Mammary epithelial cell (primary cell): ENCODE measurements at regions of chr5 and their contacts with region 1.

Region 1: DNA sequence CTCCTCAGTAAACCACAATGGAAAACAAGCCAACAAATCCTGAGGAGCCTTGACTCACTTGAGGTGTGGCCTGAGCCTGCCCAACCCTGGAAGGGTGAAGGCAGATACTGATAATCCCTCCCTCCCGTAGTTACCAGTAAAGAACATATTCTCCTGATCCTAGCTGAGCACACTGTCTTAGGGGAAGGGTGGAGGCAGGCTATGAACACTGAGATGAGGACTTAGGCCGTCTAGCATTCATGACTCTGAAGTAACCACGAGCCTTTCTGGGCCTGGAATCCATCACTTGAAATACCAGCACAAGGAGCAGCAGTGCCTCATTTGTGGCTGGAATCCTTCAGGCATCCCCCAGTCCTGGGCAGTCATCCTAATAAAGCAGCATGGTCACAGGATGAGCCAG is 124.5 kb upstream of the PRLR start:
- DNase-seq: no peak
- H3K4me3 ChIP-seq: no peak overlapping the region
- H3K27ac ChIP-seq: no peak overlapping the region
- H3K4me1 ChIP-seq: no peaks in the 10 kb centered on the region
- H3K27me3 ChIP-seq: no peaks in the 10 kb centered on the region
- CTCF ChIP-seq: no peak

Region 2: GRCh38 chr5:35136386-35136785 is 218.4 kb before region 1 on chr5:
- CTCF ChIA-PET with region 1: no interaction called
- dilution Hi-C with region 1: no loop called
- in situ Hi-C with region 1: no loop called
- intact Hi-C with region 1: no loop called
- DNase-seq: peak; percentile 65
- H3K4me3 ChIP-seq: no peak overlapping the region
- H3K27ac ChIP-seq: no peak overlapping the region
- H3K4me1 ChIP-seq: no peaks in the 10 kb centered on the region
- H3K27me3 ChIP-seq: no peaks in the 10 kb centered on the region
- CTCF ChIP-seq: no peak

Region 3: GRCh38 chr5:35598707-35599370 is 244.1 kb after region 1 on chr5:
- CTCF ChIA-PET with region 1: no interaction called
- dilution Hi-C with region 1: loop called (anchors 10 kb)
- in situ Hi-C with region 1: no loop called
- intact Hi-C with region 1: no loop called
- DNase-seq: no peak
- H3K4me3 ChIP-seq: no peak overlapping the region
- H3K27ac ChIP-seq: no peak overlapping the region
- H3K4me1 ChIP-seq: no peaks in the 10 kb centered on the region
- H3K27me3 ChIP-seq: no peaks in the 10 kb centered on the region
- CTCF ChIP-seq: no peak